Endothelial cell of umbilical vein (primary cell): ENCODE measurements at regions of chr11 and their contacts with region 1.

Region 1: GRCh38 chr11:43419460-43419859 is 60.7 kb downstream of the TTC17 start:
- DNase-seq: peak; percentile 59
- H3K4me3 ChIP-seq: no peak overlapping the region
- H3K27ac ChIP-seq: no peak overlapping the region
- H3K4me1 ChIP-seq: no peaks in the 10 kb centered on the region
- H3K27me3 ChIP-seq: no peaks in the 10 kb centered on the region
- CTCF ChIP-seq: peak; percentile 37 to 47
- POLR2A ChIP-seq: no peak

Region 2: GRCh38 chr11:42802201-42802899 is 617.1 kb before region 1 on chr11:
- CTCF ChIA-PET with region 1: no interaction called
- POLR2A ChIA-PET with region 1: no interaction called
- dilution Hi-C with region 1: no loop called
- intact Hi-C with region 1: no loop called
- DNase-seq: no peak
- H3K4me3 ChIP-seq: no peak overlapping the region
- H3K27ac ChIP-seq: no peak overlapping the region
- H3K4me1 ChIP-seq: no peaks in the 10 kb centered on the region
- H3K27me3 ChIP-seq: no peaks in the 10 kb centered on the region
- CTCF ChIP-seq: no peak
- POLR2A ChIP-seq: no peak

Region 3: DNA sequence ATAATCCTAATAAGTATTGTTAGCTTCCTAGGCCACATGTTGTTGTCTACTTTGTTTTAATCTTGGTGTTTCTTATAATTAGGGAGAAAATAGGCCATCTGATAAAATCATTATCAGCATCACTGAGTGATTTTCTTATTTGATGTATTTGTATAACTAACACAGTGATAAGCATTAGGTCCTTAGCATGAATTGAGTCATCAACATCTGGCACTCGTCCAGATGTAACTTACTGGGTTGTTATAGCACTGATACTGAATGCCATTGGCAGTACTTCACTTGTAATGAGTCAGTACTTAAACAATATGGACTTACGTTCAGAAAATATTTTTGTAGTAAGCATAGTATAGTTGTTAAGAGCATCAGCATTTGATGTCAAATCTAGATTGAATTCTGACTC is 91.5 kb before region 1 on chr11:
- CTCF ChIA-PET with region 1: interaction called, 7 read pairs
- POLR2A ChIA-PET with region 1: no interaction called
- dilution Hi-C with region 1: no loop called
- intact Hi-C with region 1: loop called (anchors 2 kb)
- DNase-seq: peak; percentile 97
- H3K4me3 ChIP-seq: no peak overlapping the region
- H3K27ac ChIP-seq: peak overlapping the region; percentile 48
- H3K4me1 ChIP-seq: peaks cover 10% of the 10 kb centered on the region
- H3K27me3 ChIP-seq: no peaks in the 10 kb centered on the region
- CTCF ChIP-seq: no peak
- POLR2A ChIP-seq: no peak

Region 4: GRCh38 chr11:43358801-43359421 is 60.5 kb before region 1 on chr11 and contains the start of gene TTC17:
- CTCF ChIA-PET with region 1: interaction called, 13 read pairs
- POLR2A ChIA-PET with region 1: no interaction called
- dilution Hi-C with region 1: no loop called
- intact Hi-C with region 1: loop called (anchors 2 kb)
- DNase-seq: peak; percentile 90
- H3K4me3 ChIP-seq: peak within 1 kb of the TSS; percentile 57 to 74 (median 62)
- H3K27ac ChIP-seq: peak within 1 kb of the TSS; percentile 66
- H3K4me1 ChIP-seq: peaks cover 17% of the 10 kb centered on the region
- H3K27me3 ChIP-seq: no peaks in the 10 kb centered on the region
- CTCF ChIP-seq: no peak
- POLR2A ChIP-seq: peak; percentile 97
- total RNA-seq, gene TTC17: 55.7 and 66.8 TPM in 2 replicates

Region 5: DNA sequence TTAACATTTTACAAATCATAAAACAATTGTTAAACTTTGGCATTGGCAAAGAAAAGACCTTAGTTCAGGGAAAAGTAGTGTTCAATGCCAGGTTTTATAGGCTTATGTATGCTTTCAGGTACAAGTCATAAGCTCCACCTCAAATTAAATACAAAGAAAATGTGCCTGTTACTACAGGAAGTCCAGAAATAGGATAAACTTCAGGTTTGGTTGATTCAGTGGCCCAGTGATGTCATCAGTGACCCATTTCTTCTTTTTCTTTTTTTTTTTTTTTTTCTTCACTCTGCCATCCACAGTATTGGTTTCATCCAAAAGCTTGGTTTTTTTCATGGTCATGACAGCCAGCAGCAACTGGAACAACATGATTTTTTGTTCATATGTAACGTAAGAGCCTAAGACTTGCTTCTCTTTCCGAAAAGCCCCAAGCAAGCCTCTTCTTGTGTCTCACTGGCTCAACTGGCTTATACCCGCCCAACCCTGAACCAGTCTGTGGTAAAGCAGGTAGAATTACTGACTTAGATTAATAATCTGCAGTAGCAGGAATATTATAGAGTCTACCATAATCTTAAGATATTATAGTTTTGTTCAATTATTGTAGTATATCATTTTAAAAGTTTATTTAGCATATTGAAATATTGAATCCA is 14.5 kb before region 1 on chr11:
- CTCF ChIA-PET with region 1: interaction called, 16 read pairs
- POLR2A ChIA-PET with region 1: no interaction called
- dilution Hi-C with region 1: no loop called
- intact Hi-C with region 1: no loop called
- DNase-seq: no peak
- H3K4me3 ChIP-seq: no peak overlapping the region
- H3K27ac ChIP-seq: no peak overlapping the region
- H3K4me1 ChIP-seq: peaks cover 5% of the 10 kb centered on the region
- H3K27me3 ChIP-seq: no peaks in the 10 kb centered on the region
- CTCF ChIP-seq: no peak
- POLR2A ChIP-seq: no peak